ENCODE measurements at regions of chr4 and their contacts with region 1.

Region 1: GRCh38 chr4:948051-948935 is 16.0 kb downstream of the TMEM175 start:
- DNase-seq: no peak
- H3K4me3 ChIP-seq: no peak overlapping the region
- H3K27ac ChIP-seq: no peak overlapping the region
- H3K4me1 ChIP-seq: no peaks in the 10 kb centered on the region
- H3K27me3 ChIP-seq: peaks cover 9% of the 10 kb centered on the region
- CTCF ChIP-seq: no peak

Region 2: GRCh38 chr4:519203-519651 is 429.1 kb before region 1 on chr4:
- CTCF ChIA-PET with region 1: no interaction called
- dilution Hi-C with region 1: no loop called
- in situ Hi-C with region 1: no loop called
- intact Hi-C with region 1: no loop called
- DNase-seq: peak; percentile 33
- H3K4me3 ChIP-seq: no peak overlapping the region
- H3K27ac ChIP-seq: no peak overlapping the region
- H3K4me1 ChIP-seq: peaks cover 7% of the 10 kb centered on the region
- H3K27me3 ChIP-seq: no peaks in the 10 kb centered on the region
- CTCF ChIP-seq: no peak

Region 3: GRCh38 chr4:891747-892146 is 56.5 kb before region 1 on chr4:
- CTCF ChIA-PET with region 1: no interaction called
- dilution Hi-C with region 1: loop called (anchors 10 kb)
- in situ Hi-C with region 1: no loop called
- intact Hi-C with region 1: no loop called
- DNase-seq: no peak
- H3K4me3 ChIP-seq: no peak overlapping the region
- H3K27ac ChIP-seq: no peak overlapping the region
- H3K4me1 ChIP-seq: no peaks in the 10 kb centered on the region
- H3K27me3 ChIP-seq: no peaks in the 10 kb centered on the region
- CTCF ChIP-seq: peak in 1 of 2 donors; percentile 28

Region 4: DNA sequence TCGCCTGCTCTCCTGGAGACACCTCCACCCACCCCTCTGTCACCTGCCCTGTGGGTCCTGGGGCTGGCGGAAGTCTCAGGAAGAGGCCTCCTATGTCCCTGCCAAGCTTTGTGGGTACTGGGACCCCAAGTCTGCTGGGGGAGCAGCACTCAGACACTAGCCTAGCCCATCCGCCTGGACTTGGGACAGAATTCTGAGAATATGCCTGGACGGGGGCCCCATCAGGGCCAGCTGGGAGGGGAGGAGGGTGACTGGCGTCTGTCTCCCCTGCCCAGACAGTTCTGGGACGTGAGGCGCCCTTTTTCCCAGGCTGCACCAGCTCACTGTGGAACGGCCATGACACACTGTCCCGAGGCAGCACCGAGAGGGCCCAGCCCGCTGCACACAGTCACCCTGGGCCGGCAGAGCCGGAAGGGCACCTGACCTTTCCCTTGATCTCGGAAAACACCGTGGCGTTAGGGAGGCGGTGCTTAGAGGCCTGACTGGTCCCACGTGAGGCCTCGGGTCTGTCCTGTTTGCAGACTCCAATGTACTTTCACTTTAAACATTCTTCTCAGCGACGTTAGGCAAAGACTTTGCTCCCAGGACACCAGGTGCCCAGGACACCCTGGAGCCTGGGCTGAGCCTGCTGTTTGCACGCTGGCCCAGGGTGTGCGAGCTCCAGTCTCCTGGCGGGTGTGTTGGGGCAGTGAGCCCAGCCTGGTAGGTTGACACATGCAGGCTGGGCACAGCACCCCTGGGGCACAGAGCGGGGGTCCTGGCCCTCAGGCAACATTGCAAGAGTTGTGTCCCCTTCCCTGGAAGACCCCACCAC is 44.2 kb after region 1 on chr4:
- CTCF ChIA-PET with region 1: no interaction called
- dilution Hi-C with region 1: loop called (anchors 5 kb)
- in situ Hi-C with region 1: no loop called
- intact Hi-C with region 1: no loop called
- DNase-seq: no peak
- H3K4me3 ChIP-seq: no peak overlapping the region
- H3K27ac ChIP-seq: no peak overlapping the region
- H3K4me1 ChIP-seq: peaks cover 12% of the 10 kb centered on the region
- H3K27me3 ChIP-seq: peaks cover 5% of the 10 kb centered on the region
- CTCF ChIP-seq: no peak